ENCODE measurements at regions of chr2 and their contacts with region 1.

Region 1: DNA sequence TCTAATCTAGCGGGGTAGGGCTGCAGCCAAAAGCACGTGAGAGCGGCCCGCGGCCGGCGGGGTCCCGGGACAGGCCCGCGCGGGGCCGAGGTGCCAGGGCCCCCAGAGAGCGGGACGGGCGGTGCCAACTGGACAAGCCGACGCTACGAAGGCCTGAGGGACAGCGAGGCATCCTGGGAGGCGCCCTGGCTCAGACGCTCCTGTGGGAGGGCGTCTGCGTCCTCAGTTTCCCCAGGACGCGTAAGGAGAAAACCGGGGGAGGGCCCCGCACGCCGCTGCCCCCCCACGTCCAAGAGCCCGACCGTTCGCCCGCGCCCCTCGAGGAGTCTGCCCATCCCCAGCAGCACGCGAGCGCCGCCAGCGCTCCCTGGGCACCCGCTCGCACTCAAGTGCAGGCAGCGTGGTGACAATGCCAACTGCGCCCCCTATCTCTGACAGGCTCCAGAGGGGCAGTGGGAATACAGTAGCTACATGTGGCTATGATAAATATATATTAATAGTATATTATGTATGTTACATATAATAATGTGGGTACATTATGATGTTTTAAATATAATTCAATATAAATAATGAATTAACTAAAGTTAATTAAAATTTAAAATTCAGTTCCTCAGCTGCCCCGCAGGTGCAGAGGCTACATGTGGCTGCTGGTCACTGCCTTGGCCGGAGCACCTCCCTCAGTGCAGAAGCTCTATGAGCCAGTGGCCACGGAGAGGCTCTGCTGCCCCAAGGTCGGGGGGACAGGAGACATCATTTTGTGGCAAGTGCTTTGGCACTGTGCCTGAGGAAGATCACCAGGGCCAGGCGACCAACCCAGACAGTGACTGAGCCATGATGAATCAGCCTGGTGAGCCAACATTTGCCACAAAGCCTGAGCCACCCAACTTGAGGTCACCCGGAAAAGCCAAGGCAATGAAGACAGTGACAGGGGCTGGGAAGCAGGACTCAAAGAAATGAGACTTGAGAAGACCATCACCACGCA is 5.5 kb upstream of the SFT2D3 start:
- DNase-seq: no peak
- H3K4me3 ChIP-seq: peak overlapping the region; percentile 12
- CTCF ChIP-seq: peak; percentile 42

Region 2: GRCh38 chr2:127681288-127681804 is 14.4 kb before region 1 on chr2:
- CTCF ChIA-PET with region 1: interaction called, 13 read pairs
- POLR2A ChIA-PET with region 1: no interaction called
- DNase-seq: no peak
- H3K4me3 ChIP-seq: no peak overlapping the region
- CTCF ChIP-seq: no peak

Measured in AG04449 (cell line).